ENCODE measurements at regions of chrX and their contacts with region 1.

Region 1: GRCh38 chrX:96407057-96407456 is 277.6 kb upstream of the DIAPH2 start:
- DNase-seq: peak; percentile 57 to 65
- H3K4me3 ChIP-seq: no peak overlapping the region
- H3K4me3 Mint-ChIP-seq: peak overlapping the region; percentile 44
- H3K27ac Mint-ChIP-seq: peak overlapping the region; percentile 42
- H3K4me1 ChIP-seq: peaks cover 27% of the 10 kb centered on the region
- H3K4me1 Mint-ChIP-seq: peaks cover 14% of the 10 kb centered on the region
- H3K27me3 ChIP-seq: no peaks in the 10 kb centered on the region
- H3K27me3 Mint-ChIP-seq: no peaks in the 10 kb centered on the region
- CTCF ChIP-seq: no peak

Region 2: DNA sequence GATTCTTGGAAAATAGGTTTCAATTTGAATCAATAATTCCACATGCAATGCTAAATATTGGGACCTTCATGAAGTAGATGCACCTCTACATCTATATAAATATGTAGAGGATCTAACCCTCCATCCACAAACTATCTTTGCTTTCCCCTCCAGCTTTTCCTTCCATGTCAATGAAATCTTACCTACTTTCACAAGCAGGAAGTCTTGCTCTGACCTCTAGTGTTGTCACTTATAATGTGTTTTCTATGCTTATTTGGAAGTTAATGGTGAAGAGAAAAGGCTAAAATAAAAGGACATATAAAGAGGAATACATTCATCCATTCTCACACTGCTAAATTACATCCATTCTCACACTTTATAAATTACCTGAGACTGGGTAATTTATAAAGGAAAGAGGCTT is 195.1 kb before region 1 on chrX:
- CTCF ChIA-PET with region 1: no interaction called
- POLR2A ChIA-PET with region 1: no interaction called
- intact Hi-C with region 1: no loop called
- DNase-seq: no peak
- H3K4me3 ChIP-seq: no peak overlapping the region
- H3K4me3 Mint-ChIP-seq: no peak overlapping the region
- H3K27ac Mint-ChIP-seq: no peak overlapping the region
- H3K4me1 ChIP-seq: no peaks in the 10 kb centered on the region
- H3K4me1 Mint-ChIP-seq: no peaks in the 10 kb centered on the region
- H3K27me3 ChIP-seq: no peaks in the 10 kb centered on the region
- H3K27me3 Mint-ChIP-seq: no peaks in the 10 kb centered on the region
- CTCF ChIP-seq: no peak

Region 3: GRCh38 chrX:96311366-96311765 is 95.7 kb before region 1 on chrX:
- CTCF ChIA-PET with region 1: no interaction called
- POLR2A ChIA-PET with region 1: no interaction called
- intact Hi-C with region 1: no loop called
- DNase-seq: no peak
- H3K4me3 ChIP-seq: no peak overlapping the region
- H3K4me3 Mint-ChIP-seq: no peak overlapping the region
- H3K27ac Mint-ChIP-seq: no peak overlapping the region
- H3K4me1 ChIP-seq: no peaks in the 10 kb centered on the region
- H3K4me1 Mint-ChIP-seq: no peaks in the 10 kb centered on the region
- H3K27me3 ChIP-seq: no peaks in the 10 kb centered on the region
- H3K27me3 Mint-ChIP-seq: peaks cover 4% of the 10 kb centered on the region
- CTCF ChIP-seq: no peak

Region 4: GRCh38 chrX:96440941-96441340 is 33.9 kb after region 1 on chrX:
- CTCF ChIA-PET with region 1: no interaction called
- POLR2A ChIA-PET with region 1: no interaction called
- intact Hi-C with region 1: loop called (anchors 5 kb)
- DNase-seq: no peak
- H3K4me3 ChIP-seq: no peak overlapping the region
- H3K4me3 Mint-ChIP-seq: no peak overlapping the region
- H3K27ac Mint-ChIP-seq: peak overlapping the region; percentile 42
- H3K4me1 ChIP-seq: peaks cover 13% of the 10 kb centered on the region
- H3K4me1 Mint-ChIP-seq: peaks cover 9% of the 10 kb centered on the region
- H3K27me3 ChIP-seq: no peaks in the 10 kb centered on the region
- H3K27me3 Mint-ChIP-seq: no peaks in the 10 kb centered on the region
- CTCF ChIP-seq: no peak

Measured in Caco-2 (cell line).